ENCODE measurements at regions of chr10 and their contacts with region 1.

Region 1: GRCh38 chr10:114684085-114684821 is 26.2 kb upstream of the ABLIM1 start:
- DNase-seq: peak; percentile 84

Region 2: DNA sequence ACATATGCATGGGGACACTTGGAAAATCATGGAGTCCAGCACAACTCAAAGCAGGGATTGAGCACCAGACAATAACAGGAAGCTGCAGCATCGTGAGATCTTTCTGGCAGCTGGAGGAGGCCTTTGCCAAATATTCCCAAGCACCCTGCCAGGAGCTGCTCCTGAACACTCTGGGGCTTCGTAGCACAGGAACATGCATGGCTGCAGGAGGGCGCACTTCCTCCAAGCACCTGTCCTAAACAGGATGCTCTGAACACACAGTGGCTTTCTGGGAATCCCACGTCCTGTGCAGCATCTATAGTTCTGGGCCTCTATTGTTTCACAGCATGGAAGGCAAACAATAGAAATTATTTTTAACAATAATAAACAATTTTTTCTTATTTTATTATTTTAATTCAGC is 30.3 kb before region 1 on chr10:
- intact Hi-C with region 1: loop called (anchors 2 kb)
- DNase-seq: peak; percentile 80

Measured in cardiac septum (tissue), 1 donor.